ENCODE measurements at regions of chr16 and their contacts with region 1.

Region 1: GRCh38 chr16:63461248-63461841 is 1425.1 kb upstream of the CDH8 start:
- DNase-seq: peak in 2 of 6 donors; percentile 11 to 13
- ATAC-seq: peak in 3 of 4 donors; percentile 47 to 63 (median 56)
- H3K4me3 ChIP-seq: no peak overlapping the region
- H3K27ac ChIP-seq: no peak overlapping the region
- H3K4me1 ChIP-seq: no peaks in the 10 kb centered on the region
- H3K27me3 ChIP-seq: no peaks in the 10 kb centered on the region
- CTCF ChIP-seq: peak in 1 of 4 donors; percentile 27

Region 2: DNA sequence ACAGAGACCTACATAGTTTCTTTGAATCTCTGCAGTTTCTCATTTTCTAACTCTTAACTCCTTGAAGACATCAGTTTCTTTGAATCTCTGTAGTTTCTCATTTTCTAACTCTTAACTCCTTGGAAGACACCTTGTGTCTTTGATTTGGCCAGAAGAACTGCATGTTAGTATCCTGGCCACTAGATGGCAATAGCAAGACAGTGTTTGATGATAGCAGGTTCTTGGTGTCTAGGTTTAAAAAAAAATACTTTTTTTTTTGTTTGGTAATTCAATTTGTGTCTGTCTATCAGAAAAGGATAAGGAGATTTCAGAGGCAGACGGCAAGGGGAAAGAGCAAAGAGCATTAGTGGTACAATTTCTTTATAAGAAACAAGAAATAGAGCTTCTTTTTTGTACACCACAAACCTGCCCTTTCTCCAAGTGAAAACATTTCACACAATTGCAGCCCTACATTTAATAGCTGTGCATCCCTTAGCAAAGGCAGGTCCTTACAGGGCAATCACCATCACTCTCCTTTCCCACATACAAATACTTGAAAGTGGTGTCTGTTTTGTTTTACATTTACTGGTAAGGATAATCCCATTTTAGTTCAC is 100.2 kb before region 1 on chr16:
- intact Hi-C with region 1: no loop called
- DNase-seq: no peak
- ATAC-seq: peak in 3 of 4 donors; percentile 50 to 71 (median 59)
- H3K4me3 ChIP-seq: no peak overlapping the region
- H3K27ac ChIP-seq: no peak overlapping the region
- H3K4me1 ChIP-seq: no peaks in the 10 kb centered on the region
- H3K27me3 ChIP-seq: no peaks in the 10 kb centered on the region
- CTCF ChIP-seq: peak; percentile 26 to 73 (median 46)

Region 3: GRCh38 chr16:63602206-63602927 is 141.0 kb after region 1 on chr16:
- intact Hi-C with region 1: no loop called
- DNase-seq: no peak
- ATAC-seq: no peak
- H3K4me3 ChIP-seq: no peak overlapping the region
- H3K27ac ChIP-seq: no peak overlapping the region
- H3K4me1 ChIP-seq: no peaks in the 10 kb centered on the region
- H3K27me3 ChIP-seq: no peaks in the 10 kb centered on the region
- CTCF ChIP-seq: no peak

Region 4: GRCh38 chr16:65117811-65118448 is 1656.6 kb after region 1 on chr16:
- intact Hi-C with region 1: loop called in 1 of 3 experiments (anchors 5 kb)
- DNase-seq: peak in 5 of 6 donors; percentile 30 to 65 (median 42)
- ATAC-seq: peak; percentile 63 to 85 (median 76)
- H3K4me3 ChIP-seq: no peak overlapping the region
- H3K27ac ChIP-seq: no peak overlapping the region
- H3K4me1 ChIP-seq: no peaks in the 10 kb centered on the region
- H3K27me3 ChIP-seq: peaks cover 0 to 10% (median 0%) of the 10 kb centered on the region in 4 donors
- CTCF ChIP-seq: peak; percentile 60 to 87 (median 80)